Activated CD4-positive, alpha-beta memory T cell treated with anti-CD3 and anti-CD28 coated beads, Interleukin-2, amount 10 ng/mL, durations not matched to agents 7 days and 5 days (primary cell): ENCODE measurements at regions of chr19 and their contacts with region 1.

Region 1: GRCh38 chr19:34677386-34678084 is at the start of gene ZNF302:
- DNase-seq: peak; percentile 95
- H3K4me3 Mint-ChIP-seq: peak within 1 kb of the TSS; percentile 79
- H3K27ac Mint-ChIP-seq: peak within 1 kb of the TSS; percentile 96
- H3K4me1 Mint-ChIP-seq: peaks cover 30% of the 10 kb centered on the region
- H3K27me3 Mint-ChIP-seq: no peaks in the 10 kb centered on the region
- total RNA-seq, gene ZNF302: 18.4 to 20.3 TPM

Region 2: GRCh38 chr19:34501339-34502320 is 175.9 kb before region 1 on chr19:
- CTCF ChIA-PET with region 1: no interaction called
- POLR2A ChIA-PET with region 1: no interaction called
- DNase-seq: peak; percentile 86
- H3K4me3 Mint-ChIP-seq: no peak overlapping the region
- H3K27ac Mint-ChIP-seq: no peak overlapping the region
- H3K4me1 Mint-ChIP-seq: peaks cover 16% of the 10 kb centered on the region
- H3K27me3 Mint-ChIP-seq: peaks cover 14% of the 10 kb centered on the region

Region 3: DNA sequence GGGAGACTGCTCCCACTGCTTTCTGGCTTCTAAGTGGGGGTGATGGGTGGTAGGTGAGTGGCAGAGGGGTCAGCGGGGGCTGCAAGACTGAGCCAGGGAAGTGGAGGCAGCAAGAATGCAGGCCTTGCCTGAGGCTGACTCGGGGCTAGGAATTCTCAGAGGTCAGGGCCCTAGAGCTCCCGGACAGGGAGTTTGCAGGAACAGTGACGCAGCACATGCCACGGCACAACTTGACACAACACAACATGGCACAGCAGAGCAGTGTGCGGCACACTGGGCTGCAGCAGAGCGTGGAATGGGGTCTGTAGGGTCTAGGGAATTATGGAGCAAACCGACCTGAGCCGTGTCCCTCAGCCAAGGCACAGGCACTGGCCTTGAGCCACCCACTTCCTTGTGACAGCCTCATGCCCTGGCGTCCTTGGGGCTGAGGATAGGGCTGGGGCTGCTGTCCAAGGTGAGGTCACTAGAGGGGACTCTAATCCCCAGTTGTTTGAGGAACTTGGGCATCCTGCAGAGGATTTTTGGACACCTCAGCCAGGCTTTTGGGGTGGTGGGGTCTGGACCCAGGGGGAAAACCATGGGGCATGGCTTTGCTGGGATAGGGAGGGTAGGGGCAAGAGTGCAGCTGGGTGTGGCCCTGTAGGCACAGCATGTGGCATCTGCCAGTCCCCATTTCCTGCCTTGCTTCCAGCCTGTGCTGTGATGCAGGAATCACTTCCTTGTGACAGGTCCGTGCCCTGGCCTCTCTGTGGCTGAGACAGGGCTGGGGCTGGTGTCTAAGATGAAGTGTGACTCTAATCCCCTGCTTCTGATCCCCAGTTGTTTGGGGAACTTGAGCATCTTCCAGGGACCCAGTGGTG is 79.3 kb before region 1 on chr19:
- CTCF ChIA-PET with region 1: no interaction called
- POLR2A ChIA-PET with region 1: no interaction called
- DNase-seq: no peak
- H3K4me3 Mint-ChIP-seq: no peak overlapping the region
- H3K27ac Mint-ChIP-seq: no peak overlapping the region
- H3K4me1 Mint-ChIP-seq: no peaks in the 10 kb centered on the region
- H3K27me3 Mint-ChIP-seq: no peaks in the 10 kb centered on the region

Region 4: GRCh38 chr19:34662919-34663318 is 14.6 kb before region 1 on chr19:
- CTCF ChIA-PET with region 1: interaction called, 16 read pairs
- POLR2A ChIA-PET with region 1: interaction called, 17 read pairs
- DNase-seq: peak; percentile 44
- H3K4me3 Mint-ChIP-seq: no peak overlapping the region
- H3K27ac Mint-ChIP-seq: no peak overlapping the region
- H3K4me1 Mint-ChIP-seq: peaks cover 16% of the 10 kb centered on the region
- H3K27me3 Mint-ChIP-seq: peaks cover under 1% of the 10 kb centered on the region

Region 5: DNA sequence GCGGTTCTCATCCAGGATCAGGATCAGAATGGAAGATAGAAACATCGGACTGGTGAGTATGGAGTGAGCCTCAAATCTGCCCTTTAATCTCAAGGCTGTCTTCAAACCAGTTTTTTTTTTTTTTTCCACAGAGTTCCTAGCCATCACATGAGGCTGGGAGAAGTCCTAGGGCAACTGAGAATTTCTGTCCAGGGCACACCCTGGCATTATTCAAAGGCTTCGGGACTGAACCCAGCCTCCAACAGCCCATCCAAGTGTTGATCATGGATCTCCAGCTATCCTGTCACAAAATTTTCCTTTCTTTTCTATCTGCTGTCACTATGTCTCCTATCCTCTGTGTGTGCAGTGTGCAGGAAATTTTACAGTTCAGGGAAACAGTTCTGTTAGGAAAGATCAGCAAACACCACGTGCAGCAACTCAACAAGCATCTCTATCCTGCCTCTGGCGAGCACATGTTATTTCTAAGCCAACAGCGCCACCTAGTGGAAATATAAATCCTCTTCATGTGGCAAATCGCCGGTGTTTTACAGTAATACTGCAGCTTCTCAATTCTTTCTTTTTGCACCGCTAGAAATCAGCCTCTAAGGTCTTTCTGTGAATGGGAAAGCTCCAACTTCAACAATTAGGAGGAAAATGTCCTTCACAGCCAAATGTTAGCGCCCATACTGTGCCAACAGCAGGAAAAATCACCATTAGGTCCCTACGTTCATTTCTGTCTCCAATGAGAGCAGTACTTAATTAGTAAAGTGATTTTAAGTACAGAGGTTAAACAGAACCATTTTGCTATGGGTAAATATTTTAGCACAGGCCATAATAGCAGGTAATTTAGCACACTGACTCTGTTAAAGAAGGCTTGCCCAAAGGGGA is 35.1 kb after region 1 on chr19:
- CTCF ChIA-PET with region 1: no interaction called
- POLR2A ChIA-PET with region 1: no interaction called
- DNase-seq: peak; percentile 57
- H3K4me3 Mint-ChIP-seq: no peak overlapping the region
- H3K27ac Mint-ChIP-seq: no peak overlapping the region
- H3K4me1 Mint-ChIP-seq: no peaks in the 10 kb centered on the region
- H3K27me3 Mint-ChIP-seq: peaks cover 8% of the 10 kb centered on the region

Region 6: GRCh38 chr19:34733826-34734600 is 56.5 kb after region 1 on chr19 and contains the start of gene ZNF181:
- CTCF ChIA-PET with region 1: interaction called, 11 read pairs
- POLR2A ChIA-PET with region 1: interaction called, 21 read pairs
- DNase-seq: peak; percentile 86
- H3K4me3 Mint-ChIP-seq: peak within 1 kb of the TSS; percentile 89
- H3K27ac Mint-ChIP-seq: peak within 1 kb of the TSS; percentile 90
- H3K4me1 Mint-ChIP-seq: peaks cover 26% of the 10 kb centered on the region
- H3K27me3 Mint-ChIP-seq: no peaks in the 10 kb centered on the region
- total RNA-seq, gene ZNF181: 4.2 to 4.7 TPM

Region 7: GRCh38 chr19:34808566-34808965 is 131.0 kb after region 1 on chr19:
- CTCF ChIA-PET with region 1: no interaction called
- POLR2A ChIA-PET with region 1: no interaction called
- DNase-seq: no peak
- H3K4me3 Mint-ChIP-seq: no peak overlapping the region
- H3K27ac Mint-ChIP-seq: no peak overlapping the region
- H3K4me1 Mint-ChIP-seq: no peaks in the 10 kb centered on the region
- H3K27me3 Mint-ChIP-seq: no peaks in the 10 kb centered on the region

Region 8: DNA sequence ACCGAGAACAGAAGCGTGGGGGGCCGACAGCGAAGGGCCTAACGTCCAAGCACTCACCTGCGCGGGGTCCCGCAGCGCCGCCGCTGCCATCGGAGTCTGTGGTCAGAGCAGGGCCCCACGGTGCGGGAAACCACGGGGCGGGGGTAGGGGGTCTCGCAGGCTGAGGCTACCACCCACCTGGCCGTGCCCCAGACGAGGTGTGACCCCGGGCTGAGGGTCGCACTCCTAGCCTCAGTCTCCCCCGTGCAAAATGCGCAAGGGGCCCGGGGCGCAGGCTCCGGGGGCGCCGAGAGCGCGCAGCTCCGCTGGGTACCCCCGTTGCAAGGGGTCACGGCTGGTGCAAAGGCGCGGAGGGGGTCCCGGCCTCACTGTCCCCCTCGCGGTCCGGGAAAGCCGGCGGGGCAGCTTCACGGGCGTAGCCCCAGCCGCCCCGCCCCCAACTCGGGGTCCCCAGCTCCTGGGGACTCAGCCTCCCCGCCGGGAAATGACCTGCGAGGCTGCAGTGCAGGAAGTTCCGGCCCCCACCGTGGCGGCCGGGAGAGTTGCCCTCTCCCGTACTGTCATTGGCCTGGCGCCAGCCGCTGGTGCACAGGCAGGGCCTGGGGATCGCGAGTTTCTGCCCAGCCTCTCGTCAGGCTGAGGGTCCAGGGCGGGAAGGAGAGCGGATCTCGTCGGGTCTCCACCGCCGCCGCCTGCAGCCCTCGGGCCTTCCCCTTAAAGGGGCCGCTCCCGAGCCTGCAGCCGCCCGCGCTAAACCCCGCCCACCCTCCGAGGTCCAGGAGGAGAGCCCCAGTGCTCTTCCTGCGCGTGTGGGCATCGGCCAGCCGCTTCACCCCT is 286.3 kb after region 1 on chr19 and contains the start of gene ZNF792:
- CTCF ChIA-PET with region 1: no interaction called
- POLR2A ChIA-PET with region 1: interaction called, 10 read pairs
- DNase-seq: peak; percentile 54
- H3K4me3 Mint-ChIP-seq: peak within 1 kb of the TSS; percentile 93
- H3K27ac Mint-ChIP-seq: peak within 1 kb of the TSS; percentile 79
- H3K4me1 Mint-ChIP-seq: peaks cover 29% of the 10 kb centered on the region
- H3K27me3 Mint-ChIP-seq: no peaks in the 10 kb centered on the region
- total RNA-seq, gene ZNF792: 18.3 to 18.9 TPM